ENCODE measurements at regions of chr15 and their contacts with region 1.

Region 1: GRCh38 chr15:92810418-92811138 is 89.5 kb upstream of the CHD2 start:
- DNase-seq: peak; percentile 76
- H3K4me3 ChIP-seq: peak overlapping the region; percentile 1 to 59 (median 46)
- H3K27ac ChIP-seq: peak overlapping the region; percentile 94 to 98 (median 96)
- H3K4me1 ChIP-seq: peaks cover 0 to 38% (median 29%) of the 10 kb centered on the region in 4 donors
- H3K27me3 ChIP-seq: no peaks in the 10 kb centered on the region
- CTCF ChIP-seq: no peak
- EP300 ChIP-seq: no peak
- POLR2A ChIP-seq: peak; percentile 42

Region 2: GRCh38 chr15:92294759-92295158 is 515.8 kb before region 1 on chr15:
- in situ Hi-C with region 1: no loop called
- intact Hi-C with region 1: no loop called
- DNase-seq: no peak
- H3K4me3 ChIP-seq: no peak overlapping the region
- H3K27ac ChIP-seq: no peak overlapping the region
- H3K4me1 ChIP-seq: no peaks in the 10 kb centered on the region
- H3K27me3 ChIP-seq: no peaks in the 10 kb centered on the region
- CTCF ChIP-seq: no peak
- EP300 ChIP-seq: no peak
- POLR2A ChIP-seq: no peak

Region 3: GRCh38 chr15:92881802-92882696 is 71.5 kb after region 1 on chr15:
- in situ Hi-C with region 1: loop called in 2 of 4 experiments (anchors 5 to 10 kb)
- intact Hi-C with region 1: loop called (anchors 5 kb)
- DNase-seq: peak; percentile 99
- H3K4me3 ChIP-seq: peak overlapping the region; percentile 23 to 100 (median 92)
- H3K27ac ChIP-seq: peak overlapping the region; percentile 98 to 100 (median 100)
- H3K4me1 ChIP-seq: peaks cover 19 to 56% (median 35%) of the 10 kb centered on the region in 4 donors
- H3K27me3 ChIP-seq: no peaks in the 10 kb centered on the region
- CTCF ChIP-seq: peak in 1 of 5 experiments; percentile 18
- EP300 ChIP-seq: no peak
- POLR2A ChIP-seq: peak; percentile 96

Region 4: DNA sequence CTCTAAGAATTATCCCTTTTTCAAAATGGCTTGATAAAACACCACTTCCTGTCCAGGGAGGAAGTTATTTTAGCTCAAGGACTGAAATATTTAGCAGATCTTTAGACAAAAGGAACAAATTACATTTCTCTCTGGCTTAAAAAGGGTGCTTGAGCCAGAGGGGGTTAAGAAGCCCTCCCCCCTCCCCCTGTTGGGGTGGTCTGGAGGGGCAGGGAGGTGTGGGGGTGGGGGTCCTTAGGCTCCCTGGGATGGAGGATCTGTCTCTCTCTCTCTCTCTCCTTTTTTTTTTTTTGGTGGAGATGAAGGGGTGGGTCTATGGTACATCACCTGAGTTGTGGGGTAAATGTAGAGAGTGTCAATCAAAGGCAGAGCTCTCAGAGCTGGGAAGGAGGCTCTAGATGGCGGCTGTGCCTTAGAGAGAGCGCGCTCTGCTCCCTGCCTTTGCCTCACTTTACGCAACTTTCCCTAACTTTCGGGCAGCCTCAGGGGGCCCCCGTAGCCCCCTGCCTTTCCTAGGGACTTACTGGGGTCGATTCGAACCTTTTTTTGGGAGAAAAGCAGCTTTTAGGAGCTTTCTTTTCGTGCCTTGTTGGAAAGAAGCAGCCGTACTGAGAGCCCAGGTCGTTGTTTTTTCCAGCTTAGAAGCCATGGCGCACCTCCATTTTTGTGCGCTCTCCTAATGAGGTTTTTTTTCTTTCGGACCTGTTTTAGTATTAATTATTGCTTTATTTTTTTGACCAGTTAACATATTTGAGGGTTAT is 89.5 kb after region 1 on chr15 and contains the start of gene CHD2:
- in situ Hi-C with region 1: loop called in 1 of 4 experiments (anchors 10 kb)
- intact Hi-C with region 1: no loop called
- DNase-seq: peak; percentile 86
- H3K4me3 ChIP-seq: peak within 1 kb of the TSS; percentile 31 to 82 (median 61)
- H3K27ac ChIP-seq: peak within 1 kb of the TSS; percentile 93 to 99 (median 98)
- H3K4me1 ChIP-seq: peaks cover 15 to 68% (median 29%) of the 10 kb centered on the region in 4 donors
- H3K27me3 ChIP-seq: no peaks in the 10 kb centered on the region
- CTCF ChIP-seq: no peak
- EP300 ChIP-seq: no peak
- POLR2A ChIP-seq: peak; percentile 98
- total RNA-seq, gene CHD2: 90.5 to 190 (median 138) TPM

Measured in transverse colon (tissue), 4 donors.